ENCODE measurements at regions of chr16 and their contacts with region 1.

Region 1: GRCh38 chr16:30065143-30065850 is at the start of gene ALDOA:
- DNase-seq: peak; percentile 82 to 97 (median 92)
- ATAC-seq: peak; percentile 90
- H3K4me3 ChIP-seq: peak within 1 kb of the TSS; percentile 94
- H3K4me3 Mint-ChIP-seq: peak within 1 kb of the TSS; percentile 96 to 100 (median 99)
- H3K27ac ChIP-seq: peak within 1 kb of the TSS; percentile 83
- H3K27ac Mint-ChIP-seq: peak within 1 kb of the TSS; percentile 90 to 99 (median 98)
- H3K4me1 ChIP-seq: peaks cover 13 to 37% of the 10 kb centered on the region in 2 donors
- H3K4me1 Mint-ChIP-seq: peaks cover 22 to 43% (median 35%) of the 10 kb centered on the region in 7 donors
- H3K27me3 ChIP-seq: no peaks in the 10 kb centered on the region
- H3K27me3 Mint-ChIP-seq: no peaks in the 10 kb centered on the region
- total RNA-seq, gene ALDOA: 356 to 1,619 (median 584) TPM

Region 2: GRCh38 chr16:29805378-29806098 is 259.8 kb before region 1 on chr16:
- CTCF ChIA-PET with region 1: no interaction called
- POLR2A ChIA-PET with region 1: interaction called, 8 read pairs
- intact Hi-C with region 1: loop called (anchors 1 to 2 kb)
- DNase-seq: peak; percentile 96 to 98 (median 98)
- ATAC-seq: peak; percentile 86
- H3K4me3 ChIP-seq: peak overlapping the region; percentile 87
- H3K4me3 Mint-ChIP-seq: peak overlapping the region; percentile 88 to 100 (median 98)
- H3K27ac ChIP-seq: peak overlapping the region; percentile 95
- H3K27ac Mint-ChIP-seq: peak overlapping the region; percentile 95 to 100 (median 99)
- H3K4me1 ChIP-seq: peaks cover 34 to 39% of the 10 kb centered on the region in 2 donors
- H3K4me1 Mint-ChIP-seq: peaks cover 28 to 49% (median 41%) of the 10 kb centered on the region in 7 donors
- H3K27me3 ChIP-seq: no peaks in the 10 kb centered on the region
- H3K27me3 Mint-ChIP-seq: peaks cover 0 to 2% (median 0%) of the 10 kb centered on the region in 5 donors

Region 3: GRCh38 chr16:30024451-30024850 is 40.8 kb before region 1 on chr16:
- CTCF ChIA-PET with region 1: no interaction called
- POLR2A ChIA-PET with region 1: no interaction called
- intact Hi-C with region 1: no loop called
- DNase-seq: no peak
- ATAC-seq: no peak
- H3K4me3 ChIP-seq: no peak overlapping the region
- H3K4me3 Mint-ChIP-seq: no peak overlapping the region
- H3K27ac ChIP-seq: no peak overlapping the region
- H3K27ac Mint-ChIP-seq: no peak overlapping the region
- H3K4me1 ChIP-seq: peaks cover 8% of the 10 kb centered on the region in 2 donors
- H3K4me1 Mint-ChIP-seq: peaks cover 5 to 17% (median 10%) of the 10 kb centered on the region in 7 donors
- H3K27me3 ChIP-seq: no peaks in the 10 kb centered on the region
- H3K27me3 Mint-ChIP-seq: peaks cover 19 to 41% (median 22%) of the 10 kb centered on the region in 5 donors

Region 4: DNA sequence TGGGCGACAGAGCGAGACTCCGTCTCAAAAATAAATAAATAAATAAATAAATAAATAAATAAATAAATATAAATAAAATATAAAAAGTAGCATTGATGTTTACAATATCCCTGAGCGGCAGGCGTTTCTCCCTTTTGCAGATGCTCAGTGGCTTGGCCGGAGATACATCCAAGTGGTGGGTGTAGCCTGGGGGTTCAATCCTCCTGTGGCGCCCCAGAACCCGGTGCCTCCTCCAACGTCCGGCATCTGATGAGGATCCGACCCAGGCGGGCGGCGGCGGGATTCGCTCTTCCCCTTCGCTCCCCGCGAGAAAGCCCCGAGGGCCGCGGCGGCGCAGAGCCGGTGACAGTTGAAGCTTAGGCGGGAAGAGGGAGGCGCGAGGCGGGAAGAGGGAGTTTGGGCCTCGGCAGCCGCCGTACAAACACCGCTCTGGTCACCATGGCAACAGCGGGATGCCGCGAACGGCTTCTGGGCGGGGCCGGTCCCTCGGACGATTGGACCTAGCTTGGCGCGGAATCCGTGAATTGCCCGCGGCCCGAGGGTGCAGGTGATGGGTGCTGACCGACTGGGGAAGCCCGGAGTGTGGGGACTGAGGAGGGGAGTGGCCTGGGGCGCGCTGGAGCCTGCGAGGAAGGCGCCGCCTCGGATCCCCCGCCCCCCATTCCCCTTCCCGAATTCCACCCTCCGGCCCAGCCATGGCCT is 12.5 kb before region 1 on chr16:
- CTCF ChIA-PET with region 1: interaction called, 5 read pairs
- POLR2A ChIA-PET with region 1: interaction called, 48 read pairs
- intact Hi-C with region 1: loop called (anchors 1 kb)
- DNase-seq: peak; percentile 70 to 96 (median 80)
- ATAC-seq: peak; percentile 87
- H3K4me3 ChIP-seq: peak overlapping the region; percentile 51
- H3K4me3 Mint-ChIP-seq: peak overlapping the region; percentile 82 to 90 (median 86)
- H3K27ac ChIP-seq: peak overlapping the region; percentile 51
- H3K27ac Mint-ChIP-seq: peak overlapping the region in 7 of 9 donors; percentile 58 to 86 (median 80)
- H3K4me1 ChIP-seq: peaks cover 4 to 5% of the 10 kb centered on the region in 2 donors
- H3K4me1 Mint-ChIP-seq: peaks cover 6 to 35% (median 24%) of the 10 kb centered on the region in 7 donors
- H3K27me3 ChIP-seq: no peaks in the 10 kb centered on the region
- H3K27me3 Mint-ChIP-seq: no peaks in the 10 kb centered on the region

Region 5: GRCh38 chr16:30112197-30113030 is 47.1 kb after region 1 on chr16:
- CTCF ChIA-PET with region 1: no interaction called
- POLR2A ChIA-PET with region 1: no interaction called
- intact Hi-C with region 1: loop called in 1 of 2 experiments (anchors 1 kb)
- DNase-seq: peak in 7 of 9 donors; percentile 31 to 76 (median 35)
- ATAC-seq: peak; percentile 60
- H3K4me3 ChIP-seq: no peak overlapping the region
- H3K4me3 Mint-ChIP-seq: no peak overlapping the region
- H3K27ac ChIP-seq: no peak overlapping the region
- H3K27ac Mint-ChIP-seq: peak overlapping the region in 2 of 9 donors; percentile 12 to 38
- H3K4me1 ChIP-seq: no peaks in the 10 kb centered on the region
- H3K4me1 Mint-ChIP-seq: peaks cover 6 to 15% (median 11%) of the 10 kb centered on the region in 7 donors
- H3K27me3 ChIP-seq: no peaks in the 10 kb centered on the region
- H3K27me3 Mint-ChIP-seq: no peaks in the 10 kb centered on the region

Region 6: DNA sequence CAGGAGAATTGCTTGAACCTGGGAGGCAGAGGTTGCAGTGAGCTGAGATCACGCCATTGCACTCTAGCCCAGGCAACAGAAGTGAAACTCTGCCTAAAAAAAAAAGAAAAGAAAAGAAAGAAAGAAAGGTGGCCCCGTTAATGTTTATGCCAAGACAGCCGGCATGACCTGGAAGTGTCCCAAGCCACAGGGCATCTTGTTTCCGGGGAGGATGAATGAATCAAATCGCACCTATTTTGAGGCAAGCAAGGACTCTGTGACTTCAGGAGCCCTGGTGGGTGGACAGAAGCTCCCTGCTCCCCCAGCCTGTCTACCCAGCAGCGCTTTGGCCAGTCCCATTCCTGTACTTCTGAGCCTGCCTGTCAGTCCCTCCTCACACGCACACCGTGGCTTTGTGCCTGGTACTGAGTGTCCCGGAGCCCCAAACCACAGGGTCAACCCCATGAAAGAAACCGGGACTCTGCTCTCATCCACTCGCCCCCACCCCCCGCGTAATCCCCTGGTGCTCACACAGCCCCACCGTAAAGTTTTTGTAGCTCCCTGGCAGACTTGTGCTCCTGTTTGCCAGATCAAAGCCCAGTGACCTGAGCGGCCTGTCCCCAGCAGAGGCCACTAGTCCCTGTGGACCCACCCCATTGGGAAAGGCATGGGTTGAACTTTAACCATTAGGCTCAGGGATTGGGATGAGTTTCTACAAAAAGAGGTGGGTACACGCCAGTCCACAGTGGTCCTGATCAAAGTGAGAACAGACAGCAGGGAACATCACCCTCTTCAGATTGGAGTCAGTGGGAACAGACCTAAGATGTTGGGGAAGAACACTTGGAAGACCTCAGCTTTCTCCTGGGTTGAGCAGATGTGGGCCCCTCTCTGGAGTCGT is 270.5 kb after region 1 on chr16:
- CTCF ChIA-PET with region 1: no interaction called
- POLR2A ChIA-PET with region 1: interaction called, 6 read pairs
- intact Hi-C with region 1: loop called in 1 of 2 experiments (anchors 2 kb)
- DNase-seq: peak in 1 of 9 donors; percentile 26
- ATAC-seq: no peak
- H3K4me3 ChIP-seq: peak overlapping the region; percentile 50
- H3K4me3 Mint-ChIP-seq: peak overlapping the region; percentile 80 to 96 (median 87)
- H3K27ac ChIP-seq: peak overlapping the region; percentile 74
- H3K27ac Mint-ChIP-seq: peak overlapping the region; percentile 57 to 91 (median 81)
- H3K4me1 ChIP-seq: peaks cover 7% of the 10 kb centered on the region in 2 donors
- H3K4me1 Mint-ChIP-seq: peaks cover 3 to 30% (median 17%) of the 10 kb centered on the region in 7 donors
- H3K27me3 ChIP-seq: no peaks in the 10 kb centered on the region
- H3K27me3 Mint-ChIP-seq: no peaks in the 10 kb centered on the region

Region 7: GRCh38 chr16:30378236-30379204 is 313.2 kb after region 1 on chr16:
- CTCF ChIA-PET with region 1: no interaction called
- POLR2A ChIA-PET with region 1: interaction called, 8 read pairs
- intact Hi-C with region 1: loop called in 1 of 2 experiments (anchors 1 kb)
- DNase-seq: peak; percentile 97 to 99 (median 99)
- ATAC-seq: peak; percentile 91
- H3K4me3 ChIP-seq: peak overlapping the region; percentile 88
- H3K4me3 Mint-ChIP-seq: peak overlapping the region; percentile 90 to 100 (median 97)
- H3K27ac ChIP-seq: peak overlapping the region; percentile 100
- H3K27ac Mint-ChIP-seq: peak overlapping the region; percentile 98 to 100 (median 100)
- H3K4me1 ChIP-seq: peaks cover 54 to 56% of the 10 kb centered on the region in 2 donors
- H3K4me1 Mint-ChIP-seq: peaks cover 32 to 61% (median 49%) of the 10 kb centered on the region in 7 donors
- H3K27me3 ChIP-seq: no peaks in the 10 kb centered on the region
- H3K27me3 Mint-ChIP-seq: no peaks in the 10 kb centered on the region

Measured in naive thymus-derived CD4-positive, alpha-beta T cell (primary cell).